A673 (cell line): ENCODE measurements at regions of chr18 and their contacts with region 1.

Region 1: GRCh38 chr18:32086861-32087260 is 4.8 kb upstream of the RNF138 start:
- DNase-seq: no peak
- H3K4me3 ChIP-seq: no peak overlapping the region
- H3K27ac ChIP-seq: no peak overlapping the region
- H3K4me1 ChIP-seq: peaks cover 18% of the 10 kb centered on the region
- H3K27me3 ChIP-seq: no peaks in the 10 kb centered on the region
- CTCF ChIP-seq: no peak

Region 2: DNA sequence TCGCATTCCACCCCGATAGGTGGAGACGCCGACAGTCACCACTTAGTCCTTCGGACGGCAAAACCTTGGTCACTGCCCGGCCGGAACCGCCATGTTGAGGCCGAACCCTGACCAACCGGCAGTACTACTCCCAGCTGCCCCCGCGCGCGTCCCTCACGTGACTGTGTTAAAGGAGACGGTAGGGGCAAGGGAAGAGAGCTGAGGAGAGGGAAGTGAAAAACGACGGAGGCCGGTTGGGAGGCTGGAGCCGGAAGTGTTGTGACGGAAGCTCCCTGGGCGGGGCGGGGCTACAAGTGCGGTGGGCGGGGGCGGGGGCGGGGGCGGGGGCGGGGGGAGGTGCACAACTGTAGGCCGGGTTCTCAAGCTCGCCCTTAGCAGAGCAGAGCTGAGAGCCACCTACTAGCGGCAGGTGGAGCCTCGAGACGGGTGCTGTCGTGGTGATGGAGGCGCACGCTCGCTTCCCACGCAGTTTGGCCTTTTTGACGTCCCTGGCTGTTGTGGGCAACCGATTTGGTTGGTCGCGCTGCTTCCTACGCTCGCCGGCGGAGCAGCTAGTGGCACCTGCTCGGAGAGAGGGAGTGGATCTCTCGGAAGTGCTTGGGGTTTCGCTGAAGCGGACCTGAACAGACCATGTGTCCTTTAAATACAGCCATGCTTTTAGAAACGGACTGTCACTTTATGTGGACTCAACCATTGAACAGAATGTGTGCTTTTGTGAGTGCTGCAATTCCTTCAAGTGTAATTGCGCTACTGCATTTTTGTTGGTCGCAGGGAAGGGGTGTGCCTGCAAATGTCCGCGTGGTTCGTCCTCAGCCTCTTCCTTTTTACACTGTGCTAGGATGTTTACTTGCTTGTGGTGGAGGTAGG is 143.6 kb before region 1 on chr18 and contains the start of gene TRAPPC8:
- CTCF ChIA-PET with region 1: no interaction called
- POLR2A ChIA-PET with region 1: no interaction called
- intact Hi-C with region 1: loop called (anchors 10 kb)
- DNase-seq: peak; percentile 98
- H3K4me3 ChIP-seq: peak within 1 kb of the TSS; percentile 100
- H3K27ac ChIP-seq: peak within 1 kb of the TSS; percentile 93
- H3K4me1 ChIP-seq: peaks cover 5% of the 10 kb centered on the region
- H3K27me3 ChIP-seq: no peaks in the 10 kb centered on the region
- CTCF ChIP-seq: no peak
- total RNA-seq, gene TRAPPC8: 34.1 and 37.9 TPM in 2 replicates